Left ventricle myocardium inferior (tissue), 1 donor: ENCODE measurements at regions of chr4 and their contacts with region 1.

Region 1: DNA sequence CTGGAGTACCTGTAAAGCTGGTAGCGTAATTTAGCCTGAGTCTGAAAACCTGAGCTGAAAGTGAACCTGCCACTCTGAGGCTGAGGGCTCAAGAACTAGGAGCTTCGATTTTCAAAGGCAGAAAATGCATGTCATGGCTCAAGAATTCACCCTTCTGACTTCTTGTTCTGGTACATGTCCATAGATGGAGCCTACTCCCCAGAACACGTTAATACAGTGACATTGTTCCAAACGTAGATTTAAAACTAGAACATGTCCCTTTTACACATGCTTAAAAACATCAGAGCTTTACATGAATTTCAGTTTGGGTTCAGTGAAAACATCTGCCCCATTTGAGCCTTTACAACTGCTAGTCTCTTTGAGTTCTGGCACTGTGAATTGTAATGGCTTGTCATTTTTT is 115.5 kb upstream of the WDR1 start:
- DNase-seq: no peak
- H3K4me3 ChIP-seq: no peak overlapping the region
- H3K27ac ChIP-seq: no peak overlapping the region
- H3K4me1 ChIP-seq: no peaks in the 10 kb centered on the region
- H3K27me3 ChIP-seq: no peaks in the 10 kb centered on the region
- CTCF ChIP-seq: no peak

Region 2: GRCh38 chr4:10204401-10205058 is 27.6 kb before region 1 on chr4:
- intact Hi-C with region 1: loop called (anchors 2 kb)
- DNase-seq: peak; percentile 27
- H3K4me3 ChIP-seq: no peak overlapping the region
- H3K27ac ChIP-seq: no peak overlapping the region
- H3K4me1 ChIP-seq: no peaks in the 10 kb centered on the region
- H3K27me3 ChIP-seq: no peaks in the 10 kb centered on the region
- CTCF ChIP-seq: no peak